CD8-positive, alpha-beta T cell (primary cell): ENCODE measurements at regions of chr3 and their contacts with region 1.

Region 1: DNA sequence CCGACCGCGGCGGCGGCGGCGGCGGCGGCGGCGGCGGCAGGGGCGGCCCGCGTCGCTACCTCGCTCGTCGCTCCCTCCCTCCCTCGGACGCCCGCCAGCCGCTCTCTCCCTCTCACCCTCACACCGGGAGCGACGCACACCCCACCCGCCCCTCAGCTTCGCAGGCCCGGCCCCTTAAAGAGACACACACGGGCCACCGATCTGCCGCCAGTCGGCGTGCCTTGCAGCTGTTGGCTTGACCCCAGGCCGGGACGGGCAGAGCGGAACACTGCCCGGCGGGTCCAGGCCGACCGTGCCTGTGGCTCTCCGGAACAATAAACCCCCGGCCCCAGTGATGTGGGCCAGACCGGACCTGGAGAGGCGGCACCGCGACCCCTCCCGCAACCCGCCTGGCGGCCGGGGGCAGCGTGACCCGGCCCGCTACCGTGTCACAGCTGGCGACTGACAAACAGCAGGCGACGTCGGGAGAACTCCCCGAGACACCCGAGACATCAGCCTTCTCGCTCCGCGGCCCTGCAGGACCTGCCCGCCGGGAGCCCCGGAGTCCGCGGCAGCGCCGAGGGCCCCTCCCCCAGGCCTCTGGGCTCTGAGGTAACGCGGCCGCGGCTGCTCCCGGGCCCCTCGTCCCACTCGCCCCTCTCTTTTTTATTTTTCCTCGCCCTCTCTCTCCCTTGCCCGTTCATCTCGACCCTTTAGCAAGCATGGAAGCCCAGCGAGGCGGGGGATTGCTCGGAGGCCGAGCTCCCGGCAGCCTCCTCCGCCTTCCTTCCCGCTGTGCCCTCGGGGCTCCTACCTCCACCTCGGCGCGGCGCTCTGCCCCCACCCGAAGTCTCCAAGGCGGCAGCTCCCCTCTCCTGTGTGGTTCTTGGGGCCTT is at the start of gene SETD2:
- DNase-seq: peak; percentile 67 to 93 (median 86)
- ATAC-seq: peak; percentile 85
- H3K4me3 ChIP-seq: peak within 1 kb of the TSS; percentile 89 to 93
- H3K4me3 Mint-ChIP-seq: peak within 1 kb of the TSS; percentile 99
- H3K27ac ChIP-seq: peak within 1 kb of the TSS; percentile 91 to 92
- H3K27ac Mint-ChIP-seq: peak within 1 kb of the TSS; percentile 97
- H3K4me1 ChIP-seq: peaks cover 44% of the 10 kb centered on the region
- H3K4me1 Mint-ChIP-seq: peaks cover 49% of the 10 kb centered on the region
- H3K27me3 ChIP-seq: no peaks in the 10 kb centered on the region
- H3K27me3 Mint-ChIP-seq: no peaks in the 10 kb centered on the region
- CTCF ChIP-seq: peak; percentile 41
- total RNA-seq, gene SETD2: 111 to 114 TPM

Region 2: GRCh38 chr3:46976326-46977190 is 187.7 kb before region 1 on chr3 and contains the start of gene CCDC12:
- CTCF ChIA-PET with region 1: no interaction called
- POLR2A ChIA-PET with region 1: interaction called, 3 read pairs
- intact Hi-C with region 1: loop called in 1 of 2 experiments (anchors 1 kb)
- DNase-seq: peak; percentile 86 to 99 (median 93)
- ATAC-seq: peak; percentile 77
- H3K4me3 ChIP-seq: peak within 1 kb of the TSS; percentile 90 to 91
- H3K4me3 Mint-ChIP-seq: peak within 1 kb of the TSS; percentile 100
- H3K27ac ChIP-seq: peak within 1 kb of the TSS; percentile 75 to 94
- H3K27ac Mint-ChIP-seq: peak within 1 kb of the TSS; percentile 99
- H3K4me1 ChIP-seq: peaks cover 65% of the 10 kb centered on the region
- H3K4me1 Mint-ChIP-seq: peaks cover 69% of the 10 kb centered on the region
- H3K27me3 ChIP-seq: no peaks in the 10 kb centered on the region
- H3K27me3 Mint-ChIP-seq: no peaks in the 10 kb centered on the region
- CTCF ChIP-seq: no peak
- total RNA-seq, gene CCDC12: 99.9 to 107 TPM

Region 3: GRCh38 chr3:47117807-47118364 is 46.4 kb before region 1 on chr3:
- CTCF ChIA-PET with region 1: interaction called, 7 read pairs
- POLR2A ChIA-PET with region 1: no interaction called
- intact Hi-C with region 1: loop called (anchors 5 kb)
- DNase-seq: no peak
- ATAC-seq: no peak
- H3K4me3 ChIP-seq: no peak overlapping the region
- H3K4me3 Mint-ChIP-seq: no peak overlapping the region
- H3K27ac ChIP-seq: no peak overlapping the region
- H3K27ac Mint-ChIP-seq: peak overlapping the region; percentile 13
- H3K4me1 ChIP-seq: peaks cover 13% of the 10 kb centered on the region
- H3K4me1 Mint-ChIP-seq: peaks cover 37% of the 10 kb centered on the region
- H3K27me3 ChIP-seq: no peaks in the 10 kb centered on the region
- H3K27me3 Mint-ChIP-seq: no peaks in the 10 kb centered on the region
- CTCF ChIP-seq: no peak

Region 4: DNA sequence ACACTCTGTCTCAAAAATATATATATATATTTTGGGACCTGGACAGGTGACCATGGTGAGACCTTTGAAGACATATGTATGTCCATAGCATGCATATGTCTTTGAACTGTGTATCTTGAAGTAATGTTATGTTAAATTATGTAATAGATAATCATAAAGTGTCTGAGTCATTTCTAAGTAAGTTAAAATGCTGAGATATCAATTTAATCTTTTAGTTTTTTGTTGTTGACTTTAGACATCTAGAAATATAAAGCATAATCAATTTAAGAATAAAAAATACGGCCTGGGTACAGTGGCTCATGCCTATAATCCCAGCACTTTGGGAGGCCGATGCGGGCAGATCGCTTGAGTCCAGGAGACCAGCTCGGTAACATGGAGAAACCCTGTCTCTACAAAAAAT is 12.3 kb after region 1 on chr3:
- CTCF ChIA-PET with region 1: no interaction called
- POLR2A ChIA-PET with region 1: no interaction called
- intact Hi-C with region 1: loop called in 1 of 2 experiments (anchors 2 kb)
- DNase-seq: no peak
- ATAC-seq: no peak
- H3K4me3 ChIP-seq: no peak overlapping the region
- H3K4me3 Mint-ChIP-seq: no peak overlapping the region
- H3K27ac ChIP-seq: no peak overlapping the region
- H3K27ac Mint-ChIP-seq: no peak overlapping the region
- H3K4me1 ChIP-seq: no peaks in the 10 kb centered on the region
- H3K4me1 Mint-ChIP-seq: no peaks in the 10 kb centered on the region
- H3K27me3 ChIP-seq: no peaks in the 10 kb centered on the region
- H3K27me3 Mint-ChIP-seq: no peaks in the 10 kb centered on the region
- CTCF ChIP-seq: no peak

Region 5: GRCh38 chr3:47324278-47324865 is 160.1 kb after region 1 on chr3:
- CTCF ChIA-PET with region 1: interaction called, 8 read pairs
- POLR2A ChIA-PET with region 1: no interaction called
- intact Hi-C with region 1: loop called (anchors 1 to 5 kb)
- DNase-seq: peak; percentile 6 to 69 (median 52)
- ATAC-seq: peak; percentile 56
- H3K4me3 ChIP-seq: no peak overlapping the region
- H3K4me3 Mint-ChIP-seq: no peak overlapping the region
- H3K27ac ChIP-seq: no peak overlapping the region
- H3K27ac Mint-ChIP-seq: no peak overlapping the region
- H3K4me1 ChIP-seq: no peaks in the 10 kb centered on the region
- H3K4me1 Mint-ChIP-seq: no peaks in the 10 kb centered on the region
- H3K27me3 ChIP-seq: no peaks in the 10 kb centered on the region
- H3K27me3 Mint-ChIP-seq: no peaks in the 10 kb centered on the region
- CTCF ChIP-seq: peak; percentile 70

Region 6: GRCh38 chr3:47475570-47476329 is 311.5 kb after region 1 on chr3 and contains the start of gene SCAP:
- CTCF ChIA-PET with region 1: no interaction called
- POLR2A ChIA-PET with region 1: no interaction called
- intact Hi-C with region 1: loop called in 1 of 2 experiments (anchors 10 kb)
- DNase-seq: peak; percentile 90 to 98 (median 96)
- ATAC-seq: peak; percentile 90
- H3K4me3 ChIP-seq: peak within 1 kb of the TSS; percentile 58 to 83
- H3K4me3 Mint-ChIP-seq: peak within 1 kb of the TSS; percentile 93
- H3K27ac ChIP-seq: peak within 1 kb of the TSS; percentile 69 to 86
- H3K27ac Mint-ChIP-seq: peak within 1 kb of the TSS; percentile 94
- H3K4me1 ChIP-seq: peaks cover 28% of the 10 kb centered on the region
- H3K4me1 Mint-ChIP-seq: peaks cover 43% of the 10 kb centered on the region
- H3K27me3 ChIP-seq: no peaks in the 10 kb centered on the region
- H3K27me3 Mint-ChIP-seq: no peaks in the 10 kb centered on the region
- CTCF ChIP-seq: peak; percentile 97
- total RNA-seq, gene SCAP: 72.8 to 76.6 TPM

Region 7: GRCh38 chr3:47802734-47803477 is 638.7 kb after region 1 on chr3 and contains the start of gene DHX30:
- CTCF ChIA-PET with region 1: no interaction called
- POLR2A ChIA-PET with region 1: no interaction called
- intact Hi-C with region 1: loop called in 1 of 2 experiments (anchors 5 kb)
- DNase-seq: peak; percentile 63 to 92 (median 83)
- ATAC-seq: peak; percentile 92
- H3K4me3 ChIP-seq: peak within 1 kb of the TSS; percentile 81 to 95
- H3K4me3 Mint-ChIP-seq: peak within 1 kb of the TSS; percentile 93
- H3K27ac ChIP-seq: peak within 1 kb of the TSS; percentile 73 to 82
- H3K27ac Mint-ChIP-seq: peak within 1 kb of the TSS; percentile 95
- H3K4me1 ChIP-seq: peaks cover 17% of the 10 kb centered on the region
- H3K4me1 Mint-ChIP-seq: peaks cover 21% of the 10 kb centered on the region
- H3K27me3 ChIP-seq: no peaks in the 10 kb centered on the region
- H3K27me3 Mint-ChIP-seq: no peaks in the 10 kb centered on the region
- CTCF ChIP-seq: no peak
- total RNA-seq, gene DHX30: 80.7 to 83.4 TPM